ENCODE measurements at regions of chr2 and their contacts with region 1.

Region 1: GRCh38 chr2:27016801-27017325 is 15.9 kb upstream of the TMEM214 start:
- DNase-seq: peak; percentile 53 to 70
- ATAC-seq: peak; percentile 40 to 68 (median 52)
- H3K4me3 ChIP-seq: no peak overlapping the region
- H3K27ac ChIP-seq: peak overlapping the region; percentile 18
- H3K4me1 ChIP-seq: peaks cover 56% of the 10 kb centered on the region
- H3K27me3 ChIP-seq: no peaks in the 10 kb centered on the region
- CTCF ChIP-seq: peak; percentile 73

Region 2: GRCh38 chr2:26959331-26959730 is 57.5 kb before region 1 on chr2:
- intact Hi-C with region 1: loop called (anchors 1 to 2 kb)
- DNase-seq: no peak
- ATAC-seq: no peak
- H3K4me3 ChIP-seq: no peak overlapping the region
- H3K27ac ChIP-seq: no peak overlapping the region
- H3K4me1 ChIP-seq: peaks cover 4% of the 10 kb centered on the region
- H3K27me3 ChIP-seq: peaks cover 0 to under 1% (median 0%) of the 10 kb centered on the region in 3 donors
- CTCF ChIP-seq: no peak

Region 3: DNA sequence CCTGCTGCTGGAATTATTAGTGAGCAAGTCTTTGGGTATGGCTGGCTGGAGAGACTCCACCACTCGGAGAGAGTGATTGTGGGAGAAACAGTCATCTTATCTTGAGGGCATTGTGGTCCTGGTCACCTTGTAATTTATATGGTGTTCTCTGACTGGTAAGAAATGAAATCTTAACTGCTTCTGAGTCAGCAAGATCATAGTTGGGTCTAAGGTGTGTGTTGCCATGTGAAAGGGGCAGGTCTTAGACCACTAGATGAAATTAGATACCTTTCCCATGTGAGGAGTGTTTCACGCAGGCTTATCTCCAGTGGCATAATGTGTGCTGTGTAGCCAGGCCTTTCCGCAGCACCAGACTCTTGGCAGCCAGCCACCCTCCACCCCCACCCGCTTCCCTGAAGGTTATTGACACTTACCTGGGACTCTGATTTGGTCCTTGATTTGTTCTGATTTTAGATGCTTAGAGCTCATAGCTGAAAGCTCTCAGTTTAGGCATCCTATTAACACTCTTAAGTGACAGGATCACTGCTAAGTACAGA is 38.7 kb before region 1 on chr2:
- intact Hi-C with region 1: loop called (anchors 5 kb)
- DNase-seq: peak in 1 of 2 donors; percentile 37
- ATAC-seq: peak; percentile 52 to 59 (median 54)
- H3K4me3 ChIP-seq: no peak overlapping the region
- H3K27ac ChIP-seq: peak overlapping the region; percentile 96
- H3K4me1 ChIP-seq: peaks cover 92% of the 10 kb centered on the region
- H3K27me3 ChIP-seq: no peaks in the 10 kb centered on the region
- CTCF ChIP-seq: no peak